ENCODE measurements at regions of chr1 and their contacts with region 1.

Region 1: DNA sequence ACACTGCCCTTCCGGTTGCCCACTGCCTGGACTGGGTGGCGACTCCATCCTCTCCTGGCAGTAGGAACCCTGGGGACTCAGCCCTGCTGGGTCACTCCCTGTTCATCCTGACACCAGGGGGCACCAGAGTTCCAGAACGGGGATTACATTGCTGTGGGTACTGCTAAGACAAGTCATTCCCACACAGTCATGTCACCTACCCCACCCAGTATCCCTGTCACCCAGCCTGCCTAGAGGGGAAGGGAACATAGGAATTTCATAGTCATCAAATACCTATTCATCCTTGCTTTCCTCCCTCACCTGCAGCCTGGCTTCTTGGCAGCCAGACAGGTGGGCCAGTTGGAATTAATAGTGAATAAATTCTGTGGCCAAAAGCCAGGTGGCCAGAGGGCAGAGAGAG is 9.8 kb upstream of the SFN start:
- DNase-seq: peak in 1 of 2 experiments; percentile 94
- H3K4me3 ChIP-seq: no peak overlapping the region
- H3K27ac ChIP-seq: no peak overlapping the region
- H3K4me1 ChIP-seq: peaks cover 0 to 10% (median 6%) of the 10 kb centered on the region in 4 experiments; a peak in 6 of 7 replicates
- H3K27me3 ChIP-seq: no peaks in the 10 kb centered on the region
- CTCF ChIP-seq: peak; percentile 85 to 87 (median 85)
- EP300 ChIP-seq: no peak
- POLR2A ChIP-seq: no peak
- RAD21 ChIP-seq: peak; percentile 74 to 83

Region 2: DNA sequence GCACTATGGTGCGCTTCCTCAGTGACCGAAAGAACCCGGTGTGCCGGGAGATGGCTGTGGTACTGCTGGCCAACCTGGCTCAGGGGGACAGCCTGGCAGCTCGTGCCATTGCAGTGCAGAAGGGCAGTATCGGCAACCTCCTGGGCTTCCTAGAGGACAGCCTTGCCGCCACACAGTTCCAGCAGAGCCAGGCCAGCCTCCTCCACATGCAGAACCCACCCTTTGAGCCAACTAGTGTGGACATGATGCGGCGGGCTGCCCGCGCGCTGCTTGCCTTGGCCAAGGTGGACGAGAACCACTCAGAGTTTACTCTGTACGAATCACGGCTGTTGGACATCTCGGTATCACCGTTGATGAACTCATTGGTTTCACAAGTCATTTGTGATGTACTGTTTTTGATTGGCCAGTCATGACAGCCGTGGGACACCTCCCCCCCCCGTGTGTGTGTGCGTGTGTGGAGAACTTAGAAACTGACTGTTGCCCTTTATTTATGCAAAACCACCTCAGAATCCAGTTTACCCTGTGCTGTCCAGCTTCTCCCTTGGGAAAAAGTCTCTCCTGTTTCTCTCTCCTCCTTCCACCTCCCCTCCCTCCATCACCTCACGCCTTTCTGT is 72.7 kb before region 1 on chr1:
- CTCF ChIA-PET with region 1: no interaction called
- POLR2A ChIA-PET with region 1: no interaction called
- DNase-seq: no peak
- H3K4me3 ChIP-seq: no peak overlapping the region
- H3K27ac ChIP-seq: no peak overlapping the region
- H3K4me1 ChIP-seq: peaks cover 0 to 4% (median 2%) of the 10 kb centered on the region in 4 experiments; a peak in 2 of 7 replicates
- H3K27me3 ChIP-seq: no peaks in the 10 kb centered on the region
- CTCF ChIP-seq: no peak
- EP300 ChIP-seq: no peak
- POLR2A ChIP-seq: no peak
- RAD21 ChIP-seq: no peak

Region 3: DNA sequence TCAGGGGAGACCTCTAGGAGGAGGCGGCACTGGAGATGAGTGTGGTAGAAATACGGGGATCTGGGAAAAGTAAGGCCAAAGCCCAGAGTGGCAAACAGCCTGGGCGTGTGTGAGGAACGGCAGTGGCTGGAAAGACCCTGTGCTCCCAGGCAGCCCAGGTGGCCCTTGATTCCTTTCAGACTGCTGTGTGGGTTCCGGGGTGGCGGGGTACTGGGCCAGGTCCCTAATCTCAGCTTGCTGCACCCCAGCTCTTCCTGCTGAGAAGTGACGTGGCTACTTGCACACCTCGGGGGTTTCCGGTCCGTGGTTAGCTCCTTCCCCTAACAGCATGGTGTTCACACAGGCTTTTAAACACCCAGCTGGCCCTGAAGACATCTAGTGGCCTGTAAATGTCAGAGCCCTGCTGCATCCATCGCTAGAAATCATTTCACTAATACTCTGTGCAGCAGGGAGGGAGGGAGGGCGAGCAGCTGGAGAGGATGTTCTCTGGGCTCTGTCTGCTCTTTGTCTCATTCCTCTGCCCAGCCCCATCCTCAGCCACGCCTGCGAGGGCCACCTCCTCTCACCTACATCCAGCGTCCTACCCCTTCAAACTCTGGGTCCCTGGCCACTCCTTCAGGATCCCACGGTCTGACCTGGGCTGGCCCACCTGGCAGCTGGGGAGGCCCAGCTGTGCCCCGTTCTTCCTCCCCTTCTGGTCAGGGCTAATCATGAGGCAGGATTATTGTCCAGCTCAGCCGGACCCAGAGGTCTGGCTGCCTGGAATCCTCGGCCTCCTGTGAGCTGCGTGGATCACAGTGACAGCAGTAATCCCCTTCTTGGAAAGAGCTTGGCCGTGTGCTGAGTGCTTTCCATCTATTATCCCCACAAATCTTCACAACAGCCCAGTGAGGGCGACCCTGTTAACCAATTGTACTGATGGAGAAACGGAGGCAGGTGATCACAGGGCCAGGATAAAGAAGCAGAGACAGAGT is 19.4 kb before region 1 on chr1:
- CTCF ChIA-PET with region 1: interaction called, 125 read pairs
- POLR2A ChIA-PET with region 1: no interaction called
- DNase-seq: no peak
- H3K4me3 ChIP-seq: no peak overlapping the region
- H3K27ac ChIP-seq: no peak overlapping the region
- H3K4me1 ChIP-seq: no peaks in the 10 kb centered on the region; a peak in 1 of 7 replicates
- H3K27me3 ChIP-seq: no peaks in the 10 kb centered on the region
- CTCF ChIP-seq: no peak
- EP300 ChIP-seq: no peak
- POLR2A ChIP-seq: no peak
- RAD21 ChIP-seq: no peak

Region 4: DNA sequence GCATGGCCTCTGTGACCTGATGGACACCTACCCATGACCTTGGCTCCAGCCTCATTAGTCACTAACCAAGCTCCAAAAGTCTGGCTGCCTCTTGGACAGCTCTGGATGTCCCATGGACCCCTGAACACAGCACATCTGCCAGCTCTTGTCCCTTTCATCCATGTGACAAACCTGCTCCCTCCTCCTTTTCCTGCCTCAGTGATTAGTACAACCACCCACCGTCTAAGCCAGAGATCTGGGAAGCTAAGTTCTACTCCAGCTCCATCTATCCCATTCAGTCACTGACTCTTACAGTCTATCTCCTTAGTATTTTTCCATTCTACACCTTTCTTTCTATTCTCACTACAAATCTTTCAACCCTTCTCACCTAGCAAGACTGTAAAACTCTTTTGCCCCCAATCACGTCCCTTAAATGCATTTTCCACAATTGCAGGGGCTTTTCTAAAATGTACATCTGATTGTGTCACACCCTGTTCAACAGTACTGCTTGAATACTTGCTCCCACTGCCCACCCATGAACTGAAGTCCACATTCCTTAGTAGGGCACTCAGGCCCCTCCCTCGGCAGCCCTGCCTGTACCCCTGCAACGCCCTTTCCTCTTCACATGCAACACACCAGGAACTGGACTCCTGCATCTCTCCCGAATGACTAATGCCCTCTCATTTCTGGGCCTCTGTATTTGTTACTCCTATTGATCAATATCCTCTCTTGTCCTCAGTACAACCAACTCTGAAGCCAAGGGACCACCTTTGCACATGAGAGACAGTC is 29.7 kb after region 1 on chr1:
- CTCF ChIA-PET with region 1: interaction called, 547 read pairs
- POLR2A ChIA-PET with region 1: interaction called, 7 read pairs
- DNase-seq: no peak
- H3K4me3 ChIP-seq: no peak overlapping the region
- H3K27ac ChIP-seq: no peak overlapping the region
- H3K4me1 ChIP-seq: no peaks in the 10 kb centered on the region
- H3K27me3 ChIP-seq: no peaks in the 10 kb centered on the region
- CTCF ChIP-seq: no peak
- EP300 ChIP-seq: no peak
- POLR2A ChIP-seq: no peak
- RAD21 ChIP-seq: no peak

Region 5: DNA sequence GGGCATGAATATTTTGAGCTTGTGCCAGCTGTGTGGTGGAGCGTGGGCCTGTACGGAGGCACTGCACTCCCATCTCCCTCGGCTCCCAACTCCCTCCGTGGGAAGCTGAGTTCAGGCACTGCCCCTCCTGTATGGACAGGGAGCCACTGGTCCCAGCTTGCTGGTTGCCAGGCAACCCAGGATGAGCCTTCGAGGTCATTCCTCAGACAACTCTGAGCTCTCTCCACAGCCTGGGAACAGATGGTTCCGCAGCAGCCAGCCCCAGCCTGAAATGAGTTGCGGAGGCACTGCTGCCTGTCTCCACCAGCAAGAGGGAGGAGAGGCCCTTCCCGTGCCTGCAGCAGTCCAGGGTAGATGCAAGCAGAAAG is 217.9 kb after region 1 on chr1:
- CTCF ChIA-PET with region 1: no interaction called
- POLR2A ChIA-PET with region 1: no interaction called
- DNase-seq: no peak
- H3K4me3 ChIP-seq: no peak overlapping the region
- H3K27ac ChIP-seq: no peak overlapping the region
- H3K4me1 ChIP-seq: peaks cover 0 to 9% (median 6%) of the 10 kb centered on the region in 4 experiments; a peak in 5 of 7 replicates
- H3K27me3 ChIP-seq: no peaks in the 10 kb centered on the region
- CTCF ChIP-seq: no peak
- EP300 ChIP-seq: no peak
- POLR2A ChIP-seq: no peak
- RAD21 ChIP-seq: no peak

Measured in H1 (cell line).